Activated CD4-positive, alpha-beta T cell treated with anti-CD3 and anti-CD28 coated beads, Interleukin-2, amount 10 ng/mL, durations not matched to agents 24 days and 14 days (primary cell): ENCODE measurements at regions of chr7 and their contacts with region 1.

Region 1: DNA sequence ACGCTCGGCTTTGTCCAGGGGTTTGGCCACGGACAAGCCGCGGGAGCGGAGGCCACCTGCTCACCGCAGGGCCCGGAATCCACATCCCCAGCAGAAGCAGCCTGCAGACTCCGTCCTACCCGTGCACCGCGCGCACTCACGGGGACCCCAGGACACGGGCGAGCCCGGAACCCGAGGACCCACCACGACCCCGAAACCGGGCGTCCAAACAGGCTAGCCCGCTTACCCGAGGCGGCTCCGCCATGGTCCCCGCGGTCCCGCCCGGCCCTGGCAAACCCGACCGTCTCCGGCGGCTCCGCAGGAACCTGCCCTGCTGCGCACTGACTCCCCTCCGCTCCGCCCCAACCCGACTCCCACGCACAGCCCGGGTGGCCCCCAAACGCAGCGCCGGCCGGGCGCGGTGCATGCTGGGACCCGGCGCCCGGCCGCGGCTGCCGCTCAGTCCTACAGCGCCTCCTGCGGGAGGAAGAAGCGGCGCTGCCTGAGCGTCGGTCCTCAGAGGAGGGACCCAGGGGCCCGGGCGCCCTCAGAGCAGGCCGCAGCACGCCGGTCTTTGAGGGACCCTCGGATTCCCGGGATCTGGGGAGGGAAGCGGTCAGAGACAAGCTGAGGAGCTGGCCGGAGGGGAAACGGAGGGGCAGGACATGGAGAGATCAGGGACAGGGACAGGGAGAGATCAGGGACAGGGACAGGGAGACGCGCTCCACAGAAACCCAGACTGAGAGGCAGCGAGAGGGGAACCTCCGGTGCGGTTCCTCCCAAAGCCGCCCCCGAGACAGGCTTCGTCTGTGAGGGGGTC is at the start of gene ZNF786:
- DNase-seq: peak; percentile 97
- H3K4me3 Mint-ChIP-seq: peak within 1 kb of the TSS; percentile 98
- H3K27ac Mint-ChIP-seq: peak within 1 kb of the TSS; percentile 100
- H3K4me1 Mint-ChIP-seq: peaks cover 15% of the 10 kb centered on the region
- H3K27me3 Mint-ChIP-seq: no peaks in the 10 kb centered on the region
- total RNA-seq, gene ZNF786: 10.2 and 10.3 TPM in 2 replicates

Region 2: GRCh38 chr7:148940702-148941597 is 149.6 kb before region 1 on chr7:
- intact Hi-C with region 1: loop called (anchors 1 kb)
- DNase-seq: peak; percentile 92
- H3K4me3 Mint-ChIP-seq: peak overlapping the region; percentile 97
- H3K27ac Mint-ChIP-seq: peak overlapping the region; percentile 99
- H3K4me1 Mint-ChIP-seq: peaks cover 17% of the 10 kb centered on the region
- H3K27me3 Mint-ChIP-seq: no peaks in the 10 kb centered on the region

Region 3: DNA sequence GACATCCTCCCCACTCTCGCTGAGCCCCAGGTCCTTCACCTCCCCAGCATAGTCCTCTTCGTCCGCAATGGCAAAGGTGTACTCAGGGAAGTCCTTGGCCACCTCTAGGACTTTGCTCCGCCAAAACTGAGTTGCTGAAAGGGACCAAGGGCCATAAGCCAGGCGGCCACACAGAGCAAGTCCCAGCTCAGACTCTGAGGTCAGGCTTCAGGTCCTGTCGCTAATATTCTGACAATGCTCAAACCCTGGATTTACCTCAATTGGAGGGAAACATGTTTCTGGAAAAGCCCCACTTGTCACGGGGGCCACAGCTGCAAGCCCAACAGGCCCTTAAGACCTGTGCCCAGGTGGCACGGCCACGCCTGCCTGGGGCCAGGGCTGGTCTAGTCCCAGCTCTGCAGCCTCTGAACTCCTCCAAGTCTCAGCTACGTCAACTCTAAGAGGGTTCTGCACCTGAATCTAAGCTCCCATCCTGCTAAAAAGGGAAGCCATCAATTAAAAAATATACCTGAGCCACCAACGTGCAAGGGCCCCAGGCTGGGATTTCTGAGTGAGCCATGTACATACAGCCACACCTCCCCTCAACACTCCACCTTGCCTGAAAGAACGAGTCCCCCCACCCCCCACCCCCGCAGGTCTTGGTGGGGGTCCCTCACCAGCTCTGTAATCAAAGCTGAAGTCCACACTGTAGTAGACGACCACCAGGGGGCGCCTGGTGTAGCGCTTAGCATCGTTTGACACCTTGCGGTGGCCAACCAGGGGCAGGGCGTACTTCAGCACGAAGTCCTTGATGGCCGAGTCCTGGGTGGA is 85.2 kb before region 1 on chr7:
- intact Hi-C with region 1: loop called (anchors 1 kb)
- DNase-seq: peak; percentile 93
- H3K4me3 Mint-ChIP-seq: no peak overlapping the region
- H3K27ac Mint-ChIP-seq: no peak overlapping the region
- H3K4me1 Mint-ChIP-seq: peaks cover 2% of the 10 kb centered on the region
- H3K27me3 Mint-ChIP-seq: no peaks in the 10 kb centered on the region

Region 4: GRCh38 chr7:149067876-149068275 is 22.7 kb before region 1 on chr7:
- intact Hi-C with region 1: loop called (anchors 1 kb)
- DNase-seq: no peak
- H3K4me3 Mint-ChIP-seq: no peak overlapping the region
- H3K27ac Mint-ChIP-seq: no peak overlapping the region
- H3K4me1 Mint-ChIP-seq: peaks cover 9% of the 10 kb centered on the region
- H3K27me3 Mint-ChIP-seq: no peaks in the 10 kb centered on the region

Region 5: DNA sequence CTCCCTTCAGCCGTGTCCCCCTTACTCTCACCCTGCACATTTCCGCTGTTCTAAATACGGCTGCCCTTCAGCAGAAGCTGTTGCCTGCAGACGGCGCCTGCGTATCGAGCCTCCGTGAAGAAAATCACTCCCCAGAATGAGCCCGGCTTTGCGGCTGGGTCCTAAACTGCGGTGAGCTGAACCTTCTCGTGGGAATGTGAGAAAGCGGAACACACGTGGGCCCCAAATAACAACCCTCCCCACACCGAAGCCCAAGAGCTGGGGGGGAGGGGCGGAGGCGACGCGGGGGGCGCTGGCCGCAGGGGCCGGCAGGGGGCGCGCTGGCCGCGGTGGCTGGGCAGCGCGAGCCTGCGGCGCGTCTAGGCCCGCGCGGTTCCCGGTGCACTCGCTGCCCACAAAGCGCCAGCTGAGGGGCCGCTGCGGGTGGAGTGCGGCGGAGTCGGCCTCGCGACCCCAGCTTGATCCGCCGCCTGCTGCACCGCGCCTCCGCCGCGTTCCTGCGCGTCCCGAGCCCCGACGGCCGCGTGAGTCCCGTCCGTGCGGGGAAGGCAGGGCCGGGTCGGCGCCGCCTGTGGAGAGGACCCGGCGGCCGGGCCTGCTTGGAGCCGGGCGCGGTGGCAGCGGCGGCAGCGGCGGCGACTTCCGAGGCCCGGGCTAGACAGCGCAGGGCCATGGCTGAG is 56.6 kb after region 1 on chr7 and contains the start of gene ZNF398:
- intact Hi-C with region 1: loop called (anchors 1 kb)
- DNase-seq: peak; percentile 93
- H3K4me3 Mint-ChIP-seq: peak within 1 kb of the TSS; percentile 93
- H3K27ac Mint-ChIP-seq: peak within 1 kb of the TSS; percentile 93
- H3K4me1 Mint-ChIP-seq: peaks cover 26% of the 10 kb centered on the region
- H3K27me3 Mint-ChIP-seq: no peaks in the 10 kb centered on the region
- total RNA-seq, gene ZNF398: 11.7 and 14.2 TPM in 2 replicates